Heart right ventricle (tissue), 16 donors: ENCODE measurements at regions of chr12 and their contacts with region 1.

Region 1: GRCh38 chr12:6230321-6231110 is 30.3 kb downstream of the CD9 start:
- DNase-seq: peak in 1 of 2 donors; percentile 61
- ATAC-seq: peak in 3 of 8 donors; percentile 3 to 11 (median 8)
- H3K4me3 ChIP-seq: peak overlapping the region in 1 of 10 donors; percentile 11
- H3K27ac ChIP-seq: peak overlapping the region; percentile 79 to 96 (median 88)
- H3K4me1 ChIP-seq: peaks cover 72 to 100% (median 95%) of the 10 kb centered on the region in 9 donors
- H3K27me3 ChIP-seq: no peaks in the 10 kb centered on the region
- CTCF ChIP-seq: no peak

Region 2: DNA sequence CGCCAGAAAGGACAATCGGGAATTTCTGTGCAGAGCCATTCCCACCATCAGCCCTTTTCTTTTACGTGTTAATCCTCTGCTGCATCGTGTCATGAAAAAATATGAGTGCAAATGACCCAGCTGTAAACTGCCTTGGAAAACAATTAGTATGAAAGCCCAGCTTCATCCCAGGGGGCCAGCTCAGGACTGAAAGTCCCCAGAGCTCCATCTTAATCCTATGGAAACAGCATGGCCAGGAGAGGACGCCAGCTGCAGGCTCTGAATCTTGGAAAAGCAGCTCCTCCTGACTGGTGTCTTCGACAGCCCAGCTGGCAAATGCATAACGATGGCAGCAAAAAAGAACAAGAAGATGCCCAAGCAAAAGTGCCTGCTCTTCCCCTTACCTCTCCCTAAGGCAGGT is 607.1 kb before region 1 on chr12:
- intact Hi-C with region 1: no loop called
- DNase-seq: no peak
- ATAC-seq: no peak
- H3K4me3 ChIP-seq: no peak overlapping the region
- H3K27ac ChIP-seq: no peak overlapping the region
- H3K4me1 ChIP-seq: peaks cover 0 to 21% (median 3%) of the 10 kb centered on the region in 9 donors
- H3K27me3 ChIP-seq: no peaks in the 10 kb centered on the region
- CTCF ChIP-seq: no peak

Region 3: GRCh38 chr12:6195665-6196535 is 34.6 kb before region 1 on chr12:
- intact Hi-C with region 1: loop called in 3 of 10 experiments (anchors 5 kb)
- DNase-seq: peak; percentile 83 to 93
- ATAC-seq: peak; percentile 72 to 87 (median 82)
- H3K4me3 ChIP-seq: no peak overlapping the region
- H3K27ac ChIP-seq: peak overlapping the region in 9 of 10 donors; percentile 27 to 83 (median 74)
- H3K4me1 ChIP-seq: peaks cover 0 to 39% (median 18%) of the 10 kb centered on the region in 9 donors
- H3K27me3 ChIP-seq: peaks cover 0 to 30% (median 0%) of the 10 kb centered on the region in 7 donors
- CTCF ChIP-seq: peak; percentile 88 to 98 (median 94)

Region 4: GRCh38 chr12:6205144-6205539 is 25.4 kb before region 1 on chr12:
- intact Hi-C with region 1: loop called in 2 of 10 experiments (anchors 2 kb)
- DNase-seq: peak; percentile 71 to 79
- ATAC-seq: peak; percentile 65 to 80 (median 72)
- H3K4me3 ChIP-seq: peak overlapping the region in 6 of 10 donors; percentile 7 to 99 (median 52)
- H3K27ac ChIP-seq: peak overlapping the region; percentile 55 to 99 (median 92)
- H3K4me1 ChIP-seq: peaks cover 28 to 99% (median 69%) of the 10 kb centered on the region in 9 donors
- H3K27me3 ChIP-seq: peaks cover 0 to 22% (median 0%) of the 10 kb centered on the region in 7 donors
- CTCF ChIP-seq: peak in 1 of 9 donors; percentile 13

Region 5: GRCh38 chr12:6272300-6273204 is 42.0 kb after region 1 on chr12:
- intact Hi-C with region 1: loop called in 6 of 10 experiments (anchors 5 kb)
- DNase-seq: no peak
- ATAC-seq: no peak
- H3K4me3 ChIP-seq: no peak overlapping the region
- H3K27ac ChIP-seq: no peak overlapping the region
- H3K4me1 ChIP-seq: peaks cover 10 to 31% (median 16%) of the 10 kb centered on the region in 9 donors
- H3K27me3 ChIP-seq: peaks cover 0 to 5% (median 0%) of the 10 kb centered on the region in 7 donors
- CTCF ChIP-seq: no peak

Region 6: GRCh38 chr12:6508087-6508486 is 277.6 kb after region 1 on chr12:
- intact Hi-C with region 1: no loop called
- DNase-seq: no peak
- ATAC-seq: no peak
- H3K4me3 ChIP-seq: no peak overlapping the region
- H3K27ac ChIP-seq: peak overlapping the region in 3 of 10 donors; percentile 8 to 50 (median 26)
- H3K4me1 ChIP-seq: peaks cover 0 to 10% (median 0%) of the 10 kb centered on the region in 9 donors
- H3K27me3 ChIP-seq: no peaks in the 10 kb centered on the region
- CTCF ChIP-seq: no peak